ENCODE measurements at regions of chr17 and their contacts with region 1.

Region 1: GRCh38 chr17:59440784-59441441 is 109.5 kb downstream of the YPEL2 start:
- DNase-seq: peak; percentile 98
- H3K4me3 ChIP-seq: peak overlapping the region in 1 of 3 experiments; percentile 4
- H3K27ac ChIP-seq: peak overlapping the region; percentile 93
- H3K4me1 ChIP-seq: peaks cover 51% of the 10 kb centered on the region
- H3K27me3 ChIP-seq: no peaks in the 10 kb centered on the region
- CTCF ChIP-seq: peak; percentile 78 to 85
- POLR2A ChIP-seq: no peak

Region 2: DNA sequence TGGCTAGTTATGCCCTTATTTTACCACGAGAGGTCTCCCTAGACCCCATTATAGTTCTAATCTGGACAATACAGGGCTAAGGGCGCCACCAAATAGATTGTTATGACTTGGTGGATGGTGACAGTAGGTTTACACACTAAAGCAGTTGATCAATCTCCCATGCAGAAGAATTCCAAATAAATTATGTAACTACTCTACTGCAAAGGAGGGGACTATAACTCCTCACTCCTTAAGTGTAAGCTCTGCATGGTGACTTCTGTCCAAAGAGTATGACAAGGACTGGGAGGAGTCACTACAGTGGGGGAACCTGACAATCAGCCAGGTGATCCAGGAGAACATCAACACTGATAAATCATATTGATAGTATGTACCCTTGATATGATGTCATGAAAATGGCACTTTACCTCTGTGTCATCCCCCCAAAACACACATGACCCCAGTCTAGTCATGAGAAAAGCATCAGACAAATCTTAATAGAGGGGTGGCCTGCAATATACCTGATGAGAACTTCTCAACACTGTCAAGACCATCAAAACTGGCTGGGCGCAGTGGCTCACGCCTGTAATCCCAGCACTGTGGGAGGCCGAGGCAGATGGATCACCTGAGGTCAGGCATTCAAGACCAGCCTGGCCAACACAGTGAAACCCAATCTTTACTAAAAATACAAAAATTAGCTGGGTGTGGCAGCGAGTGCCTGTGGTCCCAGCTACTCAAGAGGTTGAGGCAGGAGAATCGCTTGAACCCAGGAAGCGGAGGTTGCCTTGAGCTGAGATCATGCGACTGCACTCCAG is 129.6 kb before region 1 on chr17:
- CTCF ChIA-PET with region 1: interaction called, 83 read pairs
- POLR2A ChIA-PET with region 1: no interaction called
- dilution Hi-C with region 1: no loop called
- intact Hi-C with region 1: loop called (anchors 1 kb)
- DNase-seq: peak; percentile 79
- H3K4me3 ChIP-seq: no peak overlapping the region
- H3K27ac ChIP-seq: no peak overlapping the region
- H3K4me1 ChIP-seq: no peaks in the 10 kb centered on the region
- H3K27me3 ChIP-seq: no peaks in the 10 kb centered on the region
- CTCF ChIP-seq: peak; percentile 64 to 67
- POLR2A ChIP-seq: no peak

Region 3: GRCh38 chr17:59372138-59372857 is 68.6 kb before region 1 on chr17:
- CTCF ChIA-PET with region 1: interaction called, 4 read pairs
- POLR2A ChIA-PET with region 1: no interaction called
- dilution Hi-C with region 1: no loop called
- intact Hi-C with region 1: loop called (anchors 2 kb)
- DNase-seq: peak; percentile 93
- H3K4me3 ChIP-seq: no peak overlapping the region
- H3K27ac ChIP-seq: peak overlapping the region; percentile 71
- H3K4me1 ChIP-seq: peaks cover 51% of the 10 kb centered on the region
- H3K27me3 ChIP-seq: no peaks in the 10 kb centered on the region
- CTCF ChIP-seq: no peak
- POLR2A ChIP-seq: no peak

Region 4: GRCh38 chr17:59413014-59413766 is 27.7 kb before region 1 on chr17:
- CTCF ChIA-PET with region 1: interaction called, 6 read pairs
- POLR2A ChIA-PET with region 1: no interaction called
- dilution Hi-C with region 1: no loop called
- intact Hi-C with region 1: loop called (anchors 1 kb)
- DNase-seq: no peak
- H3K4me3 ChIP-seq: no peak overlapping the region
- H3K27ac ChIP-seq: no peak overlapping the region
- H3K4me1 ChIP-seq: no peaks in the 10 kb centered on the region
- H3K27me3 ChIP-seq: no peaks in the 10 kb centered on the region
- CTCF ChIP-seq: no peak
- POLR2A ChIP-seq: no peak

Region 5: GRCh38 chr17:59451706-59452105 is 10.8 kb after region 1 on chr17:
- CTCF ChIA-PET with region 1: interaction called, 12 read pairs
- POLR2A ChIA-PET with region 1: no interaction called
- dilution Hi-C with region 1: no loop called
- intact Hi-C with region 1: no loop called
- DNase-seq: no peak
- H3K4me3 ChIP-seq: no peak overlapping the region
- H3K27ac ChIP-seq: no peak overlapping the region
- H3K4me1 ChIP-seq: no peaks in the 10 kb centered on the region
- H3K27me3 ChIP-seq: no peaks in the 10 kb centered on the region
- CTCF ChIP-seq: no peak
- POLR2A ChIP-seq: no peak

Region 6: DNA sequence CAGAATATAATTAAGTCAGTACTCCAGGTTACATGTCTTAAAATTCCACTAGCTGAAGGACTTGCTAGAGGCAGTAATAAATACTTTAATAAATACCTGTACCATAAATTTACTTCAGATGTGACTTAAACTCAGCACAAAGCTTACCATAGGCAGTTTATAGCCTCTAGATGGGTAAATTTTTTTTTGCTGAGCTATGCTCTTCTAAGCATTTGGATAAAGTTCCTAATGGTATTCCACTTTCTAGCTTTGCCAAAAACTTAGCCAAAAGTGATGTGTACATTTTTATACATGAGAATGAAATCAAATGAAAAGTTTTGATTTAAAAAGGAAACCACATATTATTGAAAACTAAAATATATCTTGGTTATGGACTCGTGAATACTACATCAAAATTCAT is 60.8 kb after region 1 on chr17:
- CTCF ChIA-PET with region 1: no interaction called
- POLR2A ChIA-PET with region 1: no interaction called
- dilution Hi-C with region 1: no loop called
- intact Hi-C with region 1: no loop called
- DNase-seq: no peak
- H3K4me3 ChIP-seq: no peak overlapping the region
- H3K27ac ChIP-seq: no peak overlapping the region
- H3K4me1 ChIP-seq: no peaks in the 10 kb centered on the region
- H3K27me3 ChIP-seq: no peaks in the 10 kb centered on the region
- CTCF ChIP-seq: no peak
- POLR2A ChIP-seq: no peak

Region 7: DNA sequence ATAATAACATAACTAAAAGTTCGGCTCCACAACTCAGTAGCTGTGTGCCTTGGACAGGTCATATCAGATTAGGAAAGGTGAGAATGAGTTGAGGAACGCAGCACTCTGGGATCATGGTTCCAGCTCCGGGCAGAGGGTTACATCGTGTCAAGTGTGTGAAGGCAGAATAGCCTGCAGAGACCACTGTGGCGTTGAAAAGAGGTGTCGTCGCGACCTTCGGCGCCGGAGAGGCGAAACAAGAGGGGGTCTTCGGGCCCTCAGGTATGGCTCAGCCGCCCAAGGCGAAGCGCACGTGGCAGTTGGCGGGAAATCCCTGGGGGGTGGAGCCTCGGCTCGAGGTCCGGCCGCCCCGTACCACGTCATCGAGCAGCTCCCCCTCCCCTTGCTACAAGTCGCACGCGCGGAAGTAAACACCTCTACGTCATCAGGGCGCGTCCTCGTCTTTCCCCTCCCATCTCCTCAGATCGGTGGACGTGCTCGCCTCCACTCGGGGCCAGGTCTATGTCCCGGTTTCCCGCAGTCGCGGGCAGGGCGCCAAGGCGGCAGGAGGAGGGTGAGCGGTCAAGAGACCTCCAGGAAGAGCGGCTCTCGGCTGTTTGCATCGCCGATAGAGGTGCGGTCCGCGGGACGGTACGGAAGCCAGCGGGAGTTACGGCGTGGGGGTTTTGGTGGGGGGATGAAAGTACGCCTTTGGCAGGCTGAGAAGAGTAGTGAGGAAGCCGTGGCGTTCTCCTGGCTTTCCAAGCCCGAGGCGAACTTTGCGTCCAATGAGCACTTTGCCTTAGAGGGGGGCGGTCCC is 124.5 kb after region 1 on chr17 and contains the start of gene DHX40:
- CTCF ChIA-PET with region 1: no interaction called
- POLR2A ChIA-PET with region 1: no interaction called
- dilution Hi-C with region 1: no loop called
- intact Hi-C with region 1: loop called (anchors 10 kb)
- DNase-seq: peak; percentile 92
- H3K4me3 ChIP-seq: peak within 1 kb of the TSS; percentile 51 to 95 (median 77)
- H3K27ac ChIP-seq: peak within 1 kb of the TSS; percentile 53
- H3K4me1 ChIP-seq: peaks cover 7% of the 10 kb centered on the region
- H3K27me3 ChIP-seq: no peaks in the 10 kb centered on the region
- CTCF ChIP-seq: no peak
- POLR2A ChIP-seq: peak; percentile 20
- total RNA-seq, gene DHX40: 28.6 and 29.7 TPM in 2 replicates

Region 8: GRCh38 chr17:59753522-59754467 is 312.9 kb after region 1 on chr17:
- CTCF ChIA-PET with region 1: no interaction called
- POLR2A ChIA-PET with region 1: no interaction called
- dilution Hi-C with region 1: no loop called
- intact Hi-C with region 1: no loop called
- DNase-seq: peak; percentile 95
- H3K4me3 ChIP-seq: peak overlapping the region in 1 of 3 experiments; percentile 48
- H3K27ac ChIP-seq: peak overlapping the region; percentile 100
- H3K4me1 ChIP-seq: peaks cover 52% of the 10 kb centered on the region
- H3K27me3 ChIP-seq: no peaks in the 10 kb centered on the region
- CTCF ChIP-seq: peak; percentile 47
- POLR2A ChIP-seq: peak; percentile 22

Measured in endothelial cell of umbilical vein (primary cell).